ENCODE measurements at regions of chrX and their contacts with region 1.

Region 1: DNA sequence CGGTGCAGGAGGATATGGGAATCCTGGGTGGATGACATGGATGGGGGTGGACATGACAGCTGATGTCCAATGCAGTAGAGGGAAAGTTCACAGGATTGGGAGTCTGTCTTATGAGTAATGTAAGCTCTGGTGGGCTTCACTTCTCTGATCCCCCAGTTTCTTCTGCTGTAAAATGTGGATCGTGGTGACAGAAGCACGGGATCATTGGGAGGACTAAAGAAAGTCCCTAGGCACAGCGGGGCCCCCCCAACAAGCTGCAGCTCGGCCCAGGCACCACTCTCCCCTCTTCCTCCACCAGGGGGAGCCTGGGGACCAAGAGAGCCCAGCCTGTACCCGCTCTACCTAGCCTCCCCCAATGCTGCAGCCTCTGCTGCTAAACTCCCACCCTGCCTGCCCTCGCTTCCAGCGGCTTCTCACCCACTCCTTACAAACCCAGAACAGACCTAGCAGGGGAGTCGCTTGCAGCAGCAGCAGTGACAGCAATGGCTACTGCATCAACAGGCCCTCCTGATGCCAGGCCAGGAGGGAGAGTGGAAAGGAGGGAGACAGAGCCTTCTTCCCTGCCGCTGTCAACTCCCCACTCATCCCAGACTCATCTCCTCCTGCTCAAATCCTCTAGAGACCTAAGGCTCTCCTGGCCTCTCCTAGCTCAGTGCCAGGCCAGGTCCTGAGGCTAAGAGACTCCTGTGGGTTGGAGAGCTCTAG is 36.1 kb upstream of the IQSEC2 start:
- DNase-seq: peak; percentile 78
- ATAC-seq: peak; percentile 89
- H3K4me3 Mint-ChIP-seq: no peak overlapping the region
- H3K27ac Mint-ChIP-seq: no peak overlapping the region
- H3K4me1 Mint-ChIP-seq: peaks cover 10% of the 10 kb centered on the region
- H3K27me3 Mint-ChIP-seq: peaks cover 28% of the 10 kb centered on the region

Region 2: DNA sequence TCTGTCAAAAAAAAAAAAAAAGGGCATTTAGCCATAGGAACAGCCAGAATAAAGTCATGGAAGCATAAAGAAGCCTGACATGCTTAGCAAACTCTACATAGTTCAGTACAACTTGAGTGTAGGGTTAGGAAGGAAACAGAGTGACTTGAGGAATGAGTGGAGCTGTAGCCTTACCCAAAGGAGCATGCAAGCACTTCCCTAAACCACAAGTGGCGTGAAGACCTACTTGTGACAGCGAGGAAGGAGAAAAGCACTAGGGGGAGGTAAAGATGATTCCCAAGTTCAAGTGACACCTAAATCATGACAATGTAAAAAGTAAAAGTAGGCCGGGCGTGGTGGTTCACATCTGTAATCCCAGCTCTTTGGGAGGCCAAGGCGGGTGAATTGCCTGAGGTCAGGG is 14.3 kb before region 1 on chrX:
- CTCF ChIA-PET with region 1: interaction called, 13 read pairs
- POLR2A ChIA-PET with region 1: no interaction called
- intact Hi-C with region 1: no loop called
- DNase-seq: no peak
- ATAC-seq: no peak
- H3K4me3 Mint-ChIP-seq: no peak overlapping the region
- H3K27ac Mint-ChIP-seq: no peak overlapping the region
- H3K4me1 Mint-ChIP-seq: no peaks in the 10 kb centered on the region
- H3K27me3 Mint-ChIP-seq: no peaks in the 10 kb centered on the region

Region 3: GRCh38 chrX:53433651-53434639 is 116.4 kb after region 1 on chrX and contains the start of gene HSD17B10:
- CTCF ChIA-PET with region 1: interaction called, 14 read pairs
- POLR2A ChIA-PET with region 1: no interaction called
- intact Hi-C with region 1: loop called (anchors 2 kb)
- DNase-seq: peak; percentile 93
- ATAC-seq: peak; percentile 95
- H3K4me3 Mint-ChIP-seq: peak within 1 kb of the TSS; percentile 98
- H3K27ac Mint-ChIP-seq: peak within 1 kb of the TSS; percentile 92
- H3K4me1 Mint-ChIP-seq: peaks cover 27% of the 10 kb centered on the region
- H3K27me3 Mint-ChIP-seq: peaks cover 2% of the 10 kb centered on the region
- total RNA-seq, gene HSD17B10: 89.0 to 92.7 TPM

Region 4: GRCh38 chrX:53481816-53482465 is 164.4 kb after region 1 on chrX:
- CTCF ChIA-PET with region 1: interaction called, 44 read pairs
- POLR2A ChIA-PET with region 1: no interaction called
- intact Hi-C with region 1: loop called (anchors 1 to 2 kb)
- DNase-seq: peak; percentile 59
- ATAC-seq: peak; percentile 47
- H3K4me3 Mint-ChIP-seq: no peak overlapping the region
- H3K27ac Mint-ChIP-seq: no peak overlapping the region
- H3K4me1 Mint-ChIP-seq: no peaks in the 10 kb centered on the region
- H3K27me3 Mint-ChIP-seq: no peaks in the 10 kb centered on the region